ENCODE measurements at regions of chr11 and their contacts with region 1.

Region 1: DNA sequence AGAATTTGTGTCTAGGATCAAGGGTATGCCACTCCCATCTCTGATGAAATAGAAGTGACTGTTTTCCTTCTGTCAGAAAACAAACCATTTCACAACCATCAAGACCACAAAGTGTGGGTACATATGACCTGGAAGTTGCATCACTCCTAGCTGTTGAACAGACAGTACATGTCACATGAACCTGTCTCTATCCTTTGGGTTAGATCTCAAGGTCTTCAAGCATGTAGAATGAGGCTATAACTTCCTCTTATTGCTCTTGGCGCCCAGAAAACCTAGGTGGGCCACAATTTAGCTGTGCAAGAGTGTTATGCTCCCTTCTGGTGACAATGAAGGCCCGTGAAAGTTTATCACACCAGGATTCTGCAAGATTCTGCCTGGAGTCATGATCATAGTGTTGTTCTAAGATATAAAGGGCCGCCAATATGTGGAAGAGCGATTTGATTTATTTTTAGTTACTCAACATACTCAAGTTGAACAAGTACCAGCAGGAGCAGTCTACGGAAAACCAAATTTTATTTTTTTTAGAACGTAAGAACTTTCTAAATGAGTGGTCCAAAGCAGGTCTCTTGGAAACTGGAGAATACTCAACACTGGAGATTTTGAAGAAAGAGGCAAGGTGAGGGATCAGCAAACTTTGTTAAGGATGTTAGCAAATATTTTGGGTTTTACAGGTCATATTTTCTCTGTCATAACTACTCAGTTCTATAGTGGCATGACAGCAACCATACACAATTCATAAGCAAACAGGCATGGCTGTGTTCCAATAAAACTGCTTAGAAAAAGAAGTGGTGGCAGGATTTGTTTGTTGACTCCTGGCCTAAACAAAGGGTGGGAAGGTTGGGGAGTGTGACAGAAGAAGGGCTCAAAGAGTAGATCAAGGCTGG is 101.8 kb downstream of the USP35 start:
- DNase-seq: peak; percentile 85
- H3K4me3 Mint-ChIP-seq: peak overlapping the region; percentile 72
- H3K27ac Mint-ChIP-seq: peak overlapping the region; percentile 84
- H3K4me1 Mint-ChIP-seq: peaks cover 50% of the 10 kb centered on the region
- H3K27me3 Mint-ChIP-seq: no peaks in the 10 kb centered on the region

Region 2: DNA sequence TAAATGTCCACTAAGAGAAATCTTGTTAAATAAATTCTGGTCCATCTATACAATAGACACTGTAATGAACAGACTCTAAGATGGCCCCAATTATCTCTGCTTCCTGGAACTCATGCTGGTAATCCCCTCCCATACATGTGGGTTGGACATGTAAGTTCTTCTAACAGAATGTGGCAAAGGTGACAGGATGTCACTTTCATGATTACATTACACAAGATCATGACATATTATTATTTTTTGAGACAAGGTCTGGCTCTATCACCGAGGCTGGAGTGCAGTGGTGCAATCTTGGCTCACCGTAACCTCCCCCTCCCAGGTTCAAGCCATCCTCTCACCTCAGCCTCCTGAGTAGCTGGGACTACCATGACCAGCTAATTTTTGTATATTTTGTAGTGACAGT is 196.3 kb before region 1 on chr11:
- intact Hi-C with region 1: loop called (anchors 1 kb)
- DNase-seq: peak; percentile 75
- H3K4me3 Mint-ChIP-seq: peak overlapping the region; percentile 12
- H3K27ac Mint-ChIP-seq: peak overlapping the region; percentile 87
- H3K4me1 Mint-ChIP-seq: peaks cover 10% of the 10 kb centered on the region
- H3K27me3 Mint-ChIP-seq: no peaks in the 10 kb centered on the region

Region 3: DNA sequence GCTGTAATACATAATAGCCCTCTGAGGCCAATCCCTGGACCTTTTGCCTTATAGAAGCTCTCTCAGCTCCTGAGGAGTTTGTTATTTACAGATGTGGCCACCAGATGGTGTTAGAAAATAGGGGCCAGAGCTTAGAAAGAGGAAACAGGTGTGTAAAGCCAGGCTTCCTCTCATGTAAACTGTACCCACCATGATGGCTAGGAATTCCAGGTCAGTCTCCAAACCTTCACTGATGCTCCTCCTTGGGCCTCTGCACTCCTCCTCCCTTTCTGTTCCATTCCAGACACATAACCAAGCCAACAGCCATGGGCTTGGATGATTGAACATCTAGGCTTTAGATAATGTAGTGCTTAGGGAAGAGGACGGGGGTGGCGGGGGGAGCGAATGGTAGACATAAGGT is 62.1 kb before region 1 on chr11:
- intact Hi-C with region 1: loop called (anchors 2 kb)
- DNase-seq: peak; percentile 83
- H3K4me3 Mint-ChIP-seq: no peak overlapping the region
- H3K27ac Mint-ChIP-seq: peak overlapping the region; percentile 31
- H3K4me1 Mint-ChIP-seq: peaks cover 59% of the 10 kb centered on the region
- H3K27me3 Mint-ChIP-seq: no peaks in the 10 kb centered on the region

Region 4: DNA sequence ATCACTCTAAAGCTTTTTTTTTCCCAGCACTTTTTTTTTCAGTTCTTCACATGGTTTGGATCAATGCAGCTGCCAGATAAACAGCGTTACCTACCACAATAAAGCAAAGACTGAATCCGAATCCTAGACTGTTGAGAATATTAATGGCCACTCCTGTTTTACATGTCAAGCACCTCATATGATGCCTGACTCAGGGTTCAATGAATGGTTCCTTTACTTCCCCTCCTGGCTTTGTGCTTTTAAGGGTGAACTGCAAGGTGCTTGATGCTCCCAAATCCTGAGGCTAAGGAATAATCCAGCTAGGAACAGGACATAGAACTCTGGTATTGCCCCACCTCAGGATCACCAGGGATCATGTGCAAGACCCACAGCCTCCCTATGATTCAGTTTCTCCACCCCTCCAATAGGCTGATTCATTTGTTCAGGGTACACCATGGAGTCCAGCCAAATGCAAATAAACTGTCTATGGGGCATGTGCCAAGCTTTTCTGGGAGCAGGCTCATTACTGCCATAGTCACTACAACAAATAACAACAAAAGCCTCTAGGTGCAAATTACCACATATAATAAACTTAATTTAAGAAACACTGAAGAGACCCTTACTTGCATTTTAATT is 22.8 kb after region 1 on chr11:
- intact Hi-C with region 1: loop called (anchors 2 kb)
- DNase-seq: no peak
- H3K4me3 Mint-ChIP-seq: no peak overlapping the region
- H3K27ac Mint-ChIP-seq: no peak overlapping the region
- H3K4me1 Mint-ChIP-seq: peaks cover 52% of the 10 kb centered on the region
- H3K27me3 Mint-ChIP-seq: no peaks in the 10 kb centered on the region

Region 5: DNA sequence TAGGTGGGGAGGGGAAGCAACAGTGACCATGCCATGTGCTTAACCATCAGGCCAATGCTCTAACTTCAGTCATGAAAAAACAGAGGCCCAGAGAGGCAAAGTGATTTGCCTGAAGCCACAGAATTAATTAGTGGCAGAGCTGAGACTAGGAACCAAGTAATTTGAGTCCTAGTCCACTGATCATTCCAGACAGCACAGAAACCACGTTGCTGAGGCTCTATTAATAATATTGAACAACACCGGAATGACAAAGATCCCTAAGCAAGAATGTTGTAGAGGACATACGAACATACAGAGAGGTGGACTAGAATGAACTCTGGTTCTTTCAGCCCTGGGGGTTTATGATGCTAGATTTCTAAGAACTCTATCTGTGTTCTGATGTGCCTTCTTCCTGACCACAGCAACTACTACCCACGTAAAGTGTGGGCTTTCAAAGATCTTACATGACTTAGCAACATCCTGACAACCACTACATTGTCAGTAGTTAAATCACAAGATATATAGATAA is 34.8 kb after region 1 on chr11:
- intact Hi-C with region 1: loop called (anchors 1 kb)
- DNase-seq: peak; percentile 83
- H3K4me3 Mint-ChIP-seq: peak overlapping the region; percentile 53
- H3K27ac Mint-ChIP-seq: peak overlapping the region; percentile 87
- H3K4me1 Mint-ChIP-seq: peaks cover 74% of the 10 kb centered on the region
- H3K27me3 Mint-ChIP-seq: no peaks in the 10 kb centered on the region

Region 6: GRCh38 chr11:78354408-78355308 is 64.1 kb after region 1 on chr11:
- intact Hi-C with region 1: no loop called
- DNase-seq: peak; percentile 57
- H3K4me3 Mint-ChIP-seq: no peak overlapping the region
- H3K27ac Mint-ChIP-seq: no peak overlapping the region
- H3K4me1 Mint-ChIP-seq: peaks cover 51% of the 10 kb centered on the region
- H3K27me3 Mint-ChIP-seq: no peaks in the 10 kb centered on the region

Region 7: GRCh38 chr11:78564490-78565467 is 274.2 kb after region 1 on chr11:
- intact Hi-C with region 1: loop called (anchors 5 kb)
- DNase-seq: peak; percentile 89
- H3K4me3 Mint-ChIP-seq: no peak overlapping the region
- H3K27ac Mint-ChIP-seq: peak overlapping the region; percentile 5
- H3K4me1 Mint-ChIP-seq: peaks cover 42% of the 10 kb centered on the region
- H3K27me3 Mint-ChIP-seq: no peaks in the 10 kb centered on the region

Region 8: DNA sequence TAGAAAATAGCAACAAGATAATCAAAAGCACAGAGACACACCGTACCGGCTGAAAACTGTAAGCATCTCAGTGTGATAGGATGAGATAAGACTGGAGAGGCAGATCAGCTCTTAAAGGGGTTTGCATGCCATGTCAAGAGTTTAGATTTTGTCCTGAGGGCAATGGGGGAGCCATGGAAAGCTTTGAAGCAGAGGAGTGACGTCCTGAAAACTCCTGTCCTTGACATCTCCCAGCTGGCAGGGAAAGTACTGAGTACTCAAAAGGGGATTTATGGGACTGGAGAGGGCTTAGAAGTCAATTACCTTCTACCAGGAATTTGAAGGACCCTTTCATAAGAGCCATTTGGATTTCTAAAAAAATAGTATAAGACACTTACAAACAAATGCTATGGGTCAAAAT is 704.6 kb after region 1 on chr11:
- intact Hi-C with region 1: no loop called
- DNase-seq: no peak
- H3K4me3 Mint-ChIP-seq: no peak overlapping the region
- H3K27ac Mint-ChIP-seq: no peak overlapping the region
- H3K4me1 Mint-ChIP-seq: no peaks in the 10 kb centered on the region
- H3K27me3 Mint-ChIP-seq: no peaks in the 10 kb centered on the region

Measured in activated CD4-positive, alpha-beta T cell treated with anti-CD3 and anti-CD28 coated beads, Interleukin-2, amount 10 ng/mL, durations not matched to agents 24 days and 14 days (primary cell).